PC-9 (cell line): ENCODE measurements at regions of chr15 and their contacts with region 1.

Region 1: GRCh38 chr15:78893538-78893937 is 20.8 kb downstream of the MORF4L1 start:
- DNase-seq: no peak
- H3K4me3 ChIP-seq: no peak overlapping the region
- H3K27ac ChIP-seq: no peak overlapping the region
- H3K4me1 ChIP-seq: no peaks in the 10 kb centered on the region
- H3K27me3 ChIP-seq: no peaks in the 10 kb centered on the region
- CTCF ChIP-seq: no peak

Region 2: GRCh38 chr15:78506971-78507830 is 386.3 kb before region 1 on chr15 and contains the start of gene HYKK:
- CTCF ChIA-PET with region 1: no interaction called
- POLR2A ChIA-PET with region 1: no interaction called
- intact Hi-C with region 1: no loop called
- DNase-seq: peak; percentile 95
- H3K4me3 ChIP-seq: peak within 1 kb of the TSS; percentile 64
- H3K27ac ChIP-seq: no peak within 1 kb of the TSS
- H3K4me1 ChIP-seq: no peaks in the 10 kb centered on the region
- H3K27me3 ChIP-seq: no peaks in the 10 kb centered on the region
- CTCF ChIP-seq: no peak
- total RNA-seq, gene HYKK: 5.6 and 6.9 TPM in 2 replicates

Region 3: GRCh38 chr15:78968539-78969271 is 75.2 kb after region 1 on chr15:
- CTCF ChIA-PET with region 1: no interaction called
- POLR2A ChIA-PET with region 1: no interaction called
- intact Hi-C with region 1: no loop called
- DNase-seq: peak; percentile 40 to 72
- H3K4me3 ChIP-seq: no peak overlapping the region; the same call in 1 of the 2 replicates
- H3K27ac ChIP-seq: peak overlapping the region; percentile 52
- H3K4me1 ChIP-seq: peaks cover 52% of the 10 kb centered on the region
- H3K27me3 ChIP-seq: no peaks in the 10 kb centered on the region
- CTCF ChIP-seq: no peak

Region 4: DNA sequence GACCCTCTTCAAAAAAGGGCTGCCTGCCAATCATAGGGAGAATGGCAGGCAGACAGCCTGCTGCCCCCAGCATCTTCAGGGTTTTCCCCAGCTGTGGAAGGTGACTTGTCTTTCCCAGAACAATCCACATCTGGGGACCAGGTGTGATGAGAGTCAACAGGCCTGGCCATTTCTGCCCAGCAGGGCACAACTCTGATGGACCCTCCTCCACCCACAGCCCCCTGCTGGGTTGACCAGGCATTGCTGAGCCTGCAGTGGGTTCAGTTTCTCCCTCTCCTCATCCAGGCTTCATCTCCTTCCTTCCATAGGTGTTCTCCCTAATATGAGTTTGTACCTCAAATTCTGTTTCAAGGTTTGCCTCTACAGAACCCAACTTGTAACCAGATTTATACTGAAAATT is 649.6 kb after region 1 on chr15:
- CTCF ChIA-PET with region 1: no interaction called
- POLR2A ChIA-PET with region 1: no interaction called
- intact Hi-C with region 1: no loop called
- DNase-seq: no peak
- H3K4me3 ChIP-seq: no peak overlapping the region
- H3K27ac ChIP-seq: no peak overlapping the region
- H3K4me1 ChIP-seq: no peaks in the 10 kb centered on the region
- H3K27me3 ChIP-seq: peaks cover 37% of the 10 kb centered on the region
- CTCF ChIP-seq: no peak

Region 5: GRCh38 chr15:80721476-80721875 is 1827.9 kb after region 1 on chr15:
- CTCF ChIA-PET with region 1: no interaction called
- POLR2A ChIA-PET with region 1: interaction called, 28 read pairs
- intact Hi-C with region 1: no loop called
- DNase-seq: no peak
- H3K4me3 ChIP-seq: no peak overlapping the region
- H3K27ac ChIP-seq: no peak overlapping the region
- H3K4me1 ChIP-seq: no peaks in the 10 kb centered on the region
- H3K27me3 ChIP-seq: no peaks in the 10 kb centered on the region
- CTCF ChIP-seq: no peak